SK-N-SH (cell line): ENCODE measurements at regions of chr4 and their contacts with region 1.

Region 1: DNA sequence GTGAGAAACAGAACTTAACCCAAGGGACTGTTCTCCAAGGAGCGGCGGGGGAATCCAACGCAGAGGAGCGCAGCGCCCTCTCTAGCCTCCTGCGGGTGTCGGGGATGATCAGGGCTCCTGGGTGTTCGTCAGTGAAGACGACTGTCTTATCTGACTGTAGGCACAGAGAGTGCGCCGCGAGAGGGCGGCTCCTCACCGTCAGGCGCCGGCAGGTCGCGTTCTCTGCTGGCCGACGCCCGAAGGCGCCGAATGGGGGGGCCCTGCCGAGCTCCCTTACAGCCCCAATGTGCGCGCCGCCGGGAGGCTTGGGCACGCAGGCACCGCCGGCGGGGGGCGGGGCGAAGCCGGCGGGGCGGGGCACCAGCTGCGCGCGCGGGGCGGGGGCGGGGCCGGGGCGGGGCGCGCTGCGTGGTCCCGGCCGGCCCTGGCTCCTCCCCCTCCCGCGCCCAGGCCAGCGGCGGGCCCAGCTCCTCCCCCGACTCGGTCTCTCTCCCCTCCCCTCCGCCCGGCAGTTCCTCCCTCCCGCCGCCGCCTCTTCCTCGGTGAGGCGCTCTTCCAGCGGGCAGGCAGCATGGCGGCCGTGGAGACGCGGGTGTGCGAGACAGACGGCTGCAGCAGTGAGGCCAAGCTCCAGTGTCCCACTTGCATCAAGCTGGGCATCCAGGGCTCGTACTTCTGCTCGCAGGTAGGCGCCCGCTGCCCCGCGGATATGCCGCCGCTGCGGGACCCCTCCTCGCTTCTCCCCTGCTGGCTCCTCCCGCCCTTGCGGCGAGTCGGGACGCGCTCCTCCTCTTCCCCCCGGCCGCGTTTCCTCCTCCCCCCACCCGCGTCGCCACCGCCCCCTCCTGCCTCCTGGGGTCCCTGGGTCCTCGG is at the start of gene METAP1:
- DNase-seq: peak; percentile 98
- H3K4me3 ChIP-seq: peak within 1 kb of the TSS; percentile 89 to 95
- H3K27ac ChIP-seq: peak within 1 kb of the TSS; percentile 74 to 93
- H3K4me1 ChIP-seq: peaks cover 0 to 6% of the 10 kb centered on the region in 2 experiments; a peak in 2 of 4 replicates
- H3K27me3 ChIP-seq: no peaks in the 10 kb centered on the region
- CTCF ChIP-seq: peak; percentile 64
- EP300 ChIP-seq: peak in 1 of 2 experiments; percentile 23; a peak in 1 of 4 replicates
- RAD21 ChIP-seq: peak; percentile 72
- polyA plus RNA-seq, gene METAP1: 41.0 and 51.2 TPM in 2 replicates

Region 2: GRCh38 chr4:98928505-98929340 is 66.7 kb before region 1 on chr4 and contains the start of gene EIF4E:
- CTCF ChIA-PET with region 1: interaction called, 13 read pairs
- POLR2A ChIA-PET with region 1: interaction called, 12 read pairs
- DNase-seq: peak; percentile 92
- H3K4me3 ChIP-seq: peak within 1 kb of the TSS; percentile 79 to 93
- H3K27ac ChIP-seq: peak within 1 kb of the TSS; percentile 95 to 98
- H3K4me1 ChIP-seq: peaks cover 0 to 7% of the 10 kb centered on the region in 2 experiments; a peak in 2 of 4 replicates
- H3K27me3 ChIP-seq: no peaks in the 10 kb centered on the region
- CTCF ChIP-seq: peak; percentile 34
- EP300 ChIP-seq: peak; percentile 5 to 7; a peak in 1 of 4 replicates
- RAD21 ChIP-seq: no peak
- polyA plus RNA-seq, gene EIF4E: 59.8 and 67.6 TPM in 2 replicates

Region 3: GRCh38 chr4:98945297-98945850 is 50.0 kb before region 1 on chr4:
- CTCF ChIA-PET with region 1: interaction called, 12 read pairs
- POLR2A ChIA-PET with region 1: no interaction called
- DNase-seq: no peak
- H3K4me3 ChIP-seq: no peak overlapping the region
- H3K27ac ChIP-seq: no peak overlapping the region
- H3K4me1 ChIP-seq: no peaks in the 10 kb centered on the region
- H3K27me3 ChIP-seq: no peaks in the 10 kb centered on the region
- CTCF ChIP-seq: no peak
- EP300 ChIP-seq: no peak
- RAD21 ChIP-seq: no peak

Region 4: GRCh38 chr4:98967786-98968339 is 27.6 kb before region 1 on chr4:
- CTCF ChIA-PET with region 1: interaction called, 12 read pairs
- POLR2A ChIA-PET with region 1: no interaction called
- DNase-seq: no peak
- H3K4me3 ChIP-seq: no peak overlapping the region
- H3K27ac ChIP-seq: no peak overlapping the region
- H3K4me1 ChIP-seq: peaks cover 3 to 6% of the 10 kb centered on the region in 2 experiments; a peak in 3 of 4 replicates
- H3K27me3 ChIP-seq: no peaks in the 10 kb centered on the region
- CTCF ChIP-seq: no peak
- EP300 ChIP-seq: no peak
- RAD21 ChIP-seq: no peak

Region 5: GRCh38 chr4:99033956-99034355 is 38.5 kb after region 1 on chr4:
- CTCF ChIA-PET with region 1: no interaction called
- POLR2A ChIA-PET with region 1: no interaction called
- DNase-seq: no peak
- H3K4me3 ChIP-seq: no peak overlapping the region
- H3K27ac ChIP-seq: peak overlapping the region in 1 of 2 experiments; percentile 28; a peak in 2 of 4 replicates
- H3K4me1 ChIP-seq: no peaks in the 10 kb centered on the region; a peak in 2 of 4 replicates
- H3K27me3 ChIP-seq: no peaks in the 10 kb centered on the region
- CTCF ChIP-seq: no peak
- EP300 ChIP-seq: no peak
- RAD21 ChIP-seq: no peak

Region 6: GRCh38 chr4:99088481-99089365 is 93.3 kb after region 1 on chr4 and contains the start of gene ADH5:
- CTCF ChIA-PET with region 1: interaction called, 11 read pairs
- POLR2A ChIA-PET with region 1: interaction called, 3 read pairs
- DNase-seq: peak; percentile 95
- H3K4me3 ChIP-seq: peak within 1 kb of the TSS; percentile 68 to 83
- H3K27ac ChIP-seq: peak within 1 kb of the TSS; percentile 77 to 94
- H3K4me1 ChIP-seq: peaks cover 0 to 3% of the 10 kb centered on the region in 2 experiments; a peak in 2 of 4 replicates
- H3K27me3 ChIP-seq: no peaks in the 10 kb centered on the region
- CTCF ChIP-seq: no peak
- EP300 ChIP-seq: no peak
- RAD21 ChIP-seq: no peak
- polyA plus RNA-seq, gene ADH5: 111 and 159 TPM in 2 replicates